Endothelial cell of umbilical vein (primary cell): ENCODE measurements at regions of chr10 and their contacts with region 1.

Region 1: GRCh38 chr10:98170249-98171117 is 36.0 kb downstream of the R3HCC1L start:
- DNase-seq: peak; percentile 67
- H3K4me3 ChIP-seq: no peak overlapping the region
- H3K27ac ChIP-seq: no peak overlapping the region
- H3K4me1 ChIP-seq: no peaks in the 10 kb centered on the region
- H3K27me3 ChIP-seq: no peaks in the 10 kb centered on the region
- CTCF ChIP-seq: peak; percentile 61 to 79
- POLR2A ChIP-seq: no peak

Region 2: DNA sequence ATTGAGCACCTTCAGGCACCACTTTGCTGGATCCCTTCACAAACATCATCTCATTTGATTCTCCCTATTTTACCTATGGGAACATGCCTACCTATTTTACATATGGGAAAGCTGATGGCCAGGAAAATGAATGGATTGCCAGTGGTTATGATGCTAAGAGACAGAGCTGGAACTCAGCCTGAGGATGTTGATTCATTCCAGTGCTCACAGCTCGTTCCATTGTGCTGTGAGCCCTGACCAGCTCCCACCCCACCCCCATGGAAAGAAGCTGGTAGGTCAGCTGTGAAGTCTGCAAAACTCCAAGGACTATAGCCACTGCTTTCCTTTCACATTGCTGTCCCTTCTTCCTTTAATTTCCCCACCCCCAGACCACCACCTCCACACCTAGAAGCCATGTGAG is 662.1 kb before region 1 on chr10:
- CTCF ChIA-PET with region 1: no interaction called
- POLR2A ChIA-PET with region 1: no interaction called
- dilution Hi-C with region 1: no loop called
- intact Hi-C with region 1: no loop called
- DNase-seq: peak; percentile 78
- H3K4me3 ChIP-seq: no peak overlapping the region
- H3K27ac ChIP-seq: no peak overlapping the region
- H3K4me1 ChIP-seq: peaks cover 9% of the 10 kb centered on the region
- H3K27me3 ChIP-seq: no peaks in the 10 kb centered on the region
- CTCF ChIP-seq: no peak
- POLR2A ChIP-seq: no peak

Region 3: GRCh38 chr10:98045785-98046389 is 124.6 kb before region 1 on chr10:
- CTCF ChIA-PET with region 1: no interaction called
- POLR2A ChIA-PET with region 1: no interaction called
- dilution Hi-C with region 1: no loop called
- intact Hi-C with region 1: no loop called
- DNase-seq: peak; percentile 53
- H3K4me3 ChIP-seq: no peak overlapping the region
- H3K27ac ChIP-seq: no peak overlapping the region
- H3K4me1 ChIP-seq: no peaks in the 10 kb centered on the region
- H3K27me3 ChIP-seq: peaks cover 3 to 5% of the 10 kb centered on the region in 2 experiments
- CTCF ChIP-seq: peak; percentile 90 to 91
- POLR2A ChIP-seq: no peak

Region 4: GRCh38 chr10:98186681-98187080 is 16.2 kb after region 1 on chr10:
- CTCF ChIA-PET with region 1: interaction called, 20 read pairs
- POLR2A ChIA-PET with region 1: no interaction called
- dilution Hi-C with region 1: no loop called
- intact Hi-C with region 1: no loop called
- DNase-seq: no peak
- H3K4me3 ChIP-seq: no peak overlapping the region
- H3K27ac ChIP-seq: no peak overlapping the region
- H3K4me1 ChIP-seq: no peaks in the 10 kb centered on the region
- H3K27me3 ChIP-seq: no peaks in the 10 kb centered on the region
- CTCF ChIP-seq: no peak
- POLR2A ChIP-seq: no peak

Region 5: DNA sequence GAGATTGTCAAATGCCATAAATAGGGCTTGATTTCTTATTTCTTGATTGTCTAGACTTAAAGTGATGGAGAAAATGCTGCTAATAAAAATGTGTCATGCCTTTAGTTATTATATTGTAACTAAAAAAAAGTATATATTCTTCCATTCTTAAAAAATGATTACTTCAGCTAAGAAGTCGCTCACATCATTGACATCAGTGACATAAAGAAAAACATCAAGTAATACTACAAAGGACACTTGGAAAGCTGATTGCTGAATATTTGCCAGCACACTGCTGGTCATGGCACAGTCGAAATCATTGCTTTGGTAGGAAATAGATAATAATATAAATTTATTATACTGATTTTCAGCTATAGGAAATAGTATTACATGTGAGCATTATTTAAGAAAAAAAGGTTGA is 34.9 kb after region 1 on chr10:
- CTCF ChIA-PET with region 1: interaction called, 11 read pairs
- POLR2A ChIA-PET with region 1: no interaction called
- dilution Hi-C with region 1: no loop called
- intact Hi-C with region 1: no loop called
- DNase-seq: no peak
- H3K4me3 ChIP-seq: no peak overlapping the region
- H3K27ac ChIP-seq: no peak overlapping the region
- H3K4me1 ChIP-seq: no peaks in the 10 kb centered on the region
- H3K27me3 ChIP-seq: no peaks in the 10 kb centered on the region
- CTCF ChIP-seq: no peak
- POLR2A ChIP-seq: no peak

Region 6: GRCh38 chr10:98316661-98317060 is 146.2 kb after region 1 on chr10:
- CTCF ChIA-PET with region 1: interaction called, 264 read pairs
- POLR2A ChIA-PET with region 1: no interaction called
- dilution Hi-C with region 1: no loop called
- intact Hi-C with region 1: no loop called
- DNase-seq: peak; percentile 82
- H3K4me3 ChIP-seq: peak overlapping the region in 1 of 3 experiments; percentile 3
- H3K27ac ChIP-seq: no peak overlapping the region
- H3K4me1 ChIP-seq: peaks cover 16% of the 10 kb centered on the region
- H3K27me3 ChIP-seq: peaks cover 0 to 10% of the 10 kb centered on the region in 2 experiments
- CTCF ChIP-seq: no peak
- POLR2A ChIP-seq: no peak

Region 7: DNA sequence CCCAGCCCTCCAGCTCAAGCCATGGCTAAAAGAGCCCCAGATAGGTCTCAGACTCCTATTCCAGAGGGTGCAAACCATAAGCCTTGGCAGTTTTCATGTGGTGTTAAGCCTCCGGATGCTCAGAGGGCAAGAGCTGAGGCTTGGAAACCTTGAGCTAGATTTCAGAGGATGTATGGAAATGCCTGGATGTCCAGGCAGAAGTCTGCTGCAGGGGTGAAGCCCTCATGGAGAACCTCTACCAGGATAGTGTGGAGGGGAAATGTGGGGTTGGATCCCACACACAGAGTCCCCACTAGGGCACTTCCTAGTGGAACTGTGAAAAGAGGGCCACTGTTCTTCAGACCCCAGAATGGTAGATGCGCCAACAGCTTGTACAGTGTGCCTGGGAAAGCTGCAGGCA is 1078.3 kb after region 1 on chr10:
- CTCF ChIA-PET with region 1: interaction called, 20 read pairs
- POLR2A ChIA-PET with region 1: no interaction called
- dilution Hi-C with region 1: no loop called
- intact Hi-C with region 1: no loop called
- DNase-seq: no peak
- H3K4me3 ChIP-seq: no peak overlapping the region
- H3K27ac ChIP-seq: no peak overlapping the region
- H3K4me1 ChIP-seq: no peaks in the 10 kb centered on the region
- H3K27me3 ChIP-seq: no peaks in the 10 kb centered on the region
- CTCF ChIP-seq: no peak
- POLR2A ChIP-seq: no peak